ENCODE measurements at regions of chr2 and their contacts with region 1.

Region 1: GRCh38 chr2:15058015-15058720 is 425.7 kb downstream of the LRATD1 start:
- DNase-seq: no peak
- ATAC-seq: peak; percentile 76
- H3K4me3 Mint-ChIP-seq: no peak overlapping the region
- H3K27ac Mint-ChIP-seq: no peak overlapping the region
- H3K4me1 Mint-ChIP-seq: peaks cover 24% of the 10 kb centered on the region
- H3K27me3 Mint-ChIP-seq: no peaks in the 10 kb centered on the region; the same call in 1 of the 2 replicates
- CTCF ChIP-seq: peak; percentile 61

Region 2: GRCh38 chr2:15069149-15069548 is 11.0 kb after region 1 on chr2:
- CTCF ChIA-PET with region 1: interaction called, 22 read pairs
- POLR2A ChIA-PET with region 1: no interaction called
- DNase-seq: no peak
- ATAC-seq: peak; percentile 70
- H3K4me3 Mint-ChIP-seq: no peak overlapping the region
- H3K27ac Mint-ChIP-seq: no peak overlapping the region
- H3K4me1 Mint-ChIP-seq: peaks cover 11% of the 10 kb centered on the region
- H3K27me3 Mint-ChIP-seq: no peaks in the 10 kb centered on the region
- CTCF ChIP-seq: no peak

Measured in WTC11 (cell line).